ENCODE measurements at regions of chr5 and their contacts with region 1.

Region 1: GRCh38 chr5:87103596-87104287 is 163.9 kb upstream of the RASA1 start:
- DNase-seq: peak; percentile 64
- H3K4me3 ChIP-seq: peak overlapping the region; percentile 22
- H3K27ac ChIP-seq: peak overlapping the region; percentile 65
- H3K4me1 ChIP-seq: peaks cover 41% of the 10 kb centered on the region
- CTCF ChIP-seq: no peak

Region 2: DNA sequence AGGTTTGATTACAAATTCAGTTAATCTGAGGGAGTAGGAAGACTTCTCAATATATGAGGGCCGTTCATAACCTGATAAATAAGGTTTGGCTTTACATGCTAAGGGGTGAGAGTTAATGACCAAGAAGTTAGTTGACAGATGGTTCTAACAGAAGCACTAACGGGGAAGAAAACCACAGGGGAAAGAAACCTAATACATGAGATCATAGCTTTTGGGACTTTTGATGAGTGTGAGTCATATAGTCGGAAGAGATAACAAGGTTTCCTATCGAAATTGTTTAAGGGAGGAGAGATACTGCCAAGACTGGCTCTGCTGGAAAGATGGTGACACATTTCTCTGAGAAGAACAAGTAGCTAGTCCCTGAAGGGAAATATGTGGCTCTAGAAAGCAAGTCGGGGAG is 345.9 kb before region 1 on chr5:
- CTCF ChIA-PET with region 1: no interaction called
- POLR2A ChIA-PET with region 1: no interaction called
- intact Hi-C with region 1: no loop called
- DNase-seq: no peak
- H3K4me3 ChIP-seq: no peak overlapping the region
- H3K27ac ChIP-seq: no peak overlapping the region
- H3K4me1 ChIP-seq: no peaks in the 10 kb centered on the region
- CTCF ChIP-seq: no peak

Region 3: DNA sequence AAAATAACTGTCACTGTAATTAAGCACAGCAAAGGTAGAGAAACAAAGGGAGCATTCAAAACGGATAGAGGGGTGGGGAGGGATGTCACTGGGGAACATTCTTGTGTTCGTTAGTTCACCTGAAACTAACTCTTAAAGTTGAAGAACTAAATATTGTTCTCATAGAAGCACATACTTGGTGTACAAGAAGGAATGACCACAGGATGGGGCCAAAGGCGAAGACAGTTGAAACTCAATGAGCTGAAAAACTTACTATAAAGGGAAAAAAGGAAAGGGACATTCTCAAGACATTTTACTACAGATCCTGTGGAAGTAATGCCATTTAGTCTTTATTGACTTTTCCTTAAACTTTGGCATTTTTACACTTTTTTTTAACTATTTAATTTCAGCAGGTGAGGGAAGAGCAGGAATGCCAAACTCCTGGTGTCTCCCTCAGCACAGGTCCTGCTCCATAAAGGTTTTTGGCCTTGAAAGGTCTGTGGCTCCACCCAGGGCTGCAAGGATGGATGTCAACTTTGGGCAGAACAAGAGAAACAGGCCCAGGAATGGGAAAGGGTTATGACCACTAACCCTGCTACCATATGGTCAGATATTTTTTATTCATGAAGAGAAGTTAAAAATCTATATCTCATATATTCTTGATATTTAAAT is 33.6 kb before region 1 on chr5:
- CTCF ChIA-PET with region 1: no interaction called
- POLR2A ChIA-PET with region 1: interaction called, 12 read pairs
- intact Hi-C with region 1: no loop called
- DNase-seq: peak; percentile 48
- H3K4me3 ChIP-seq: no peak overlapping the region
- H3K27ac ChIP-seq: no peak overlapping the region
- H3K4me1 ChIP-seq: peaks cover 23% of the 10 kb centered on the region
- CTCF ChIP-seq: peak; percentile 69

Region 4: GRCh38 chr5:87121304-87122150 is 17.8 kb after region 1 on chr5:
- CTCF ChIA-PET with region 1: no interaction called
- POLR2A ChIA-PET with region 1: interaction called, 8 read pairs
- intact Hi-C with region 1: loop called (anchors 2 kb)
- DNase-seq: peak; percentile 20
- H3K4me3 ChIP-seq: no peak overlapping the region
- H3K27ac ChIP-seq: no peak overlapping the region
- H3K4me1 ChIP-seq: peaks cover 22% of the 10 kb centered on the region
- CTCF ChIP-seq: no peak

Region 5: DNA sequence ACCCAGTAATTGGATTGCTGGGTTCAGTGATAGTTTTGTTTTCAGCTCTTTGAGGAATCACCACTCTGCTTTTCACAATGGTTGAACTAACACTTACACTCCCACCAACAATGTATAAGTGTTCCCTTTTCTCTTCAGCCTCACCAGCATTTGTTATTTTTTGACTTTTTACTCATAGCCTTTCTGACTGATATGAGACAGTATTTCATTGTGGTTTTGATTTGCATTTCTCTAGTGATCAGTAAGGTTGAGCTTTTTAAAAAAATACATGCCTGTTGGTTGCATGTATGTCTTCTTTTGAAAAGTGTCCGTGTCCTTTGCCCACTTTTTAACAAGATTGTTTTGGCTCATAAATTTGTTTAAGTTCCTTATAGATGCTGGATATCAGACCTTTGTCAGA is 494.7 kb after region 1 on chr5:
- CTCF ChIA-PET with region 1: no interaction called
- POLR2A ChIA-PET with region 1: no interaction called
- intact Hi-C with region 1: no loop called
- DNase-seq: no peak
- H3K4me3 ChIP-seq: no peak overlapping the region
- H3K27ac ChIP-seq: no peak overlapping the region
- H3K4me1 ChIP-seq: no peaks in the 10 kb centered on the region
- CTCF ChIP-seq: no peak